GM12878 (cell line): ENCODE measurements at regions of chr17 and their contacts with region 1.

Region 1: GRCh38 chr17:28057731-28058279 is 15.3 kb downstream of the NLK start:
- DNase-seq: peak; percentile 84
- ATAC-seq: peak; percentile 89
- H3K4me3 ChIP-seq: peak overlapping the region; percentile 22; the same call in 1 of the 2 replicates
- H3K27ac ChIP-seq: peak overlapping the region; percentile 66
- H3K4me1 ChIP-seq: peaks cover 52% of the 10 kb centered on the region
- H3K27me3 ChIP-seq: no peaks in the 10 kb centered on the region
- CTCF ChIP-seq: no peak
- EP300 ChIP-seq: peak; percentile 98 to 99
- POLR2A ChIP-seq: no peak
- RAD21 ChIP-seq: no peak

Region 2: GRCh38 chr17:27293898-27294688 is 763.7 kb before region 1 on chr17 and contains the start of gene WSB1:
- CTCF ChIA-PET with region 1: no interaction called
- POLR2A ChIA-PET with region 1: no interaction called
- RAD21 ChIA-PET with region 1: no interaction called
- SMC1A ChIA-PET with region 1: no interaction called
- in situ Hi-C with region 1: loop called (anchors 25 kb)
- intact Hi-C with region 1: no loop called
- DNase-seq: peak; percentile 61
- ATAC-seq: peak; percentile 83
- H3K4me3 ChIP-seq: peak within 1 kb of the TSS; percentile 86
- H3K27ac ChIP-seq: peak within 1 kb of the TSS; percentile 97
- H3K4me1 ChIP-seq: peaks cover 11% of the 10 kb centered on the region
- H3K27me3 ChIP-seq: no peaks in the 10 kb centered on the region
- CTCF ChIP-seq: no peak
- EP300 ChIP-seq: peak; percentile 20 to 57; a peak in 2 of 4 replicates
- POLR2A ChIP-seq: peak; percentile 100
- RAD21 ChIP-seq: no peak
- polyA plus RNA-seq, gene WSB1: 26.6 to 49.8 TPM

Region 3: GRCh38 chr17:27892866-27893769 is 164.7 kb before region 1 on chr17 and contains the start of gene LYRM9:
- CTCF ChIA-PET with region 1: interaction called, 19 read pairs
- POLR2A ChIA-PET with region 1: no interaction called
- RAD21 ChIA-PET with region 1: interaction called, 4 read pairs
- SMC1A ChIA-PET with region 1: interaction called, 3 read pairs
- in situ Hi-C with region 1: no loop called
- intact Hi-C with region 1: no loop called
- DNase-seq: peak; percentile 48
- ATAC-seq: peak; percentile 99
- H3K4me3 ChIP-seq: peak within 1 kb of the TSS; percentile 65
- H3K27ac ChIP-seq: peak within 1 kb of the TSS; percentile 61
- H3K4me1 ChIP-seq: peaks cover 8% of the 10 kb centered on the region
- H3K27me3 ChIP-seq: no peaks in the 10 kb centered on the region
- CTCF ChIP-seq: peak; percentile 77 to 91 (median 79)
- EP300 ChIP-seq: no peak
- POLR2A ChIP-seq: peak; percentile 72
- RAD21 ChIP-seq: peak; percentile 40
- polyA plus RNA-seq, gene LYRM9: 1.8 to 2.7 TPM

Region 4: DNA sequence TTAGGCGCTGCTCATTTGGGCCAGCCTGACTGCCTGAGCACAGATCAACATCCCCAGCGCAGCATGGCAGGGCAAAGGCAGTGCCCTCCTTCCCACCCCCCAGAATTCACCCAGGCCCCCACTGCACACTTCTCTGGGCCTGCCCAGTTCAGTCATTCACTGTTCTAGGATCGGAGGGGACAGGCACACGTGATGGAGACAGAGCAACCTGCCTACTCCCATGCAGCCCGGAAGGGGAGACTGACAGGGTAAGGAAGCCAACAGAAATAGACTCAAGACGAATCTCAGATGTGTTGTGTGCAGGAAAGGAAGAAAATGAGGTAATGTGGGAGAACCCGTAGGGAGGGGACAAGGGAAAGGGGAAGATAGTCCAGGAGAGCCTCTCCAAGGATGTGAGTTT is 105.4 kb before region 1 on chr17:
- CTCF ChIA-PET with region 1: no interaction called
- POLR2A ChIA-PET with region 1: no interaction called
- RAD21 ChIA-PET with region 1: no interaction called
- SMC1A ChIA-PET with region 1: no interaction called
- in situ Hi-C with region 1: no loop called
- intact Hi-C with region 1: no loop called
- DNase-seq: no peak
- ATAC-seq: no peak
- H3K4me3 ChIP-seq: no peak overlapping the region
- H3K27ac ChIP-seq: no peak overlapping the region
- H3K4me1 ChIP-seq: no peaks in the 10 kb centered on the region
- H3K27me3 ChIP-seq: no peaks in the 10 kb centered on the region
- CTCF ChIP-seq: no peak
- EP300 ChIP-seq: no peak
- POLR2A ChIP-seq: no peak
- RAD21 ChIP-seq: no peak

Region 5: GRCh38 chr17:28041068-28041843 is 16.5 kb before region 1 on chr17:
- CTCF ChIA-PET with region 1: interaction called, 6 read pairs
- POLR2A ChIA-PET with region 1: interaction called, 10 read pairs
- RAD21 ChIA-PET with region 1: interaction called, 16 read pairs
- SMC1A ChIA-PET with region 1: interaction called, 72 read pairs
- in situ Hi-C with region 1: no loop called
- intact Hi-C with region 1: no loop called
- DNase-seq: peak; percentile 97
- ATAC-seq: peak; percentile 96
- H3K4me3 ChIP-seq: peak overlapping the region; percentile 53
- H3K27ac ChIP-seq: no peak overlapping the region; the same call in 1 of the 2 replicates
- H3K4me1 ChIP-seq: peaks cover 10% of the 10 kb centered on the region
- H3K27me3 ChIP-seq: no peaks in the 10 kb centered on the region
- CTCF ChIP-seq: no peak
- EP300 ChIP-seq: peak in 1 of 2 experiments; percentile 7; a peak in 1 of 4 replicates
- POLR2A ChIP-seq: peak; percentile 94
- RAD21 ChIP-seq: no peak

Region 6: GRCh38 chr17:28078341-28079229 is 20.8 kb after region 1 on chr17:
- CTCF ChIA-PET with region 1: interaction called, 5 read pairs
- POLR2A ChIA-PET with region 1: interaction called, 3 read pairs
- RAD21 ChIA-PET with region 1: interaction called, 3 read pairs
- SMC1A ChIA-PET with region 1: interaction called, 11 read pairs
- in situ Hi-C with region 1: no loop called
- intact Hi-C with region 1: no loop called
- DNase-seq: no peak
- ATAC-seq: no peak
- H3K4me3 ChIP-seq: no peak overlapping the region
- H3K27ac ChIP-seq: no peak overlapping the region
- H3K4me1 ChIP-seq: peaks cover 4% of the 10 kb centered on the region
- H3K27me3 ChIP-seq: no peaks in the 10 kb centered on the region
- CTCF ChIP-seq: no peak
- EP300 ChIP-seq: no peak
- POLR2A ChIP-seq: no peak
- RAD21 ChIP-seq: no peak

Region 7: DNA sequence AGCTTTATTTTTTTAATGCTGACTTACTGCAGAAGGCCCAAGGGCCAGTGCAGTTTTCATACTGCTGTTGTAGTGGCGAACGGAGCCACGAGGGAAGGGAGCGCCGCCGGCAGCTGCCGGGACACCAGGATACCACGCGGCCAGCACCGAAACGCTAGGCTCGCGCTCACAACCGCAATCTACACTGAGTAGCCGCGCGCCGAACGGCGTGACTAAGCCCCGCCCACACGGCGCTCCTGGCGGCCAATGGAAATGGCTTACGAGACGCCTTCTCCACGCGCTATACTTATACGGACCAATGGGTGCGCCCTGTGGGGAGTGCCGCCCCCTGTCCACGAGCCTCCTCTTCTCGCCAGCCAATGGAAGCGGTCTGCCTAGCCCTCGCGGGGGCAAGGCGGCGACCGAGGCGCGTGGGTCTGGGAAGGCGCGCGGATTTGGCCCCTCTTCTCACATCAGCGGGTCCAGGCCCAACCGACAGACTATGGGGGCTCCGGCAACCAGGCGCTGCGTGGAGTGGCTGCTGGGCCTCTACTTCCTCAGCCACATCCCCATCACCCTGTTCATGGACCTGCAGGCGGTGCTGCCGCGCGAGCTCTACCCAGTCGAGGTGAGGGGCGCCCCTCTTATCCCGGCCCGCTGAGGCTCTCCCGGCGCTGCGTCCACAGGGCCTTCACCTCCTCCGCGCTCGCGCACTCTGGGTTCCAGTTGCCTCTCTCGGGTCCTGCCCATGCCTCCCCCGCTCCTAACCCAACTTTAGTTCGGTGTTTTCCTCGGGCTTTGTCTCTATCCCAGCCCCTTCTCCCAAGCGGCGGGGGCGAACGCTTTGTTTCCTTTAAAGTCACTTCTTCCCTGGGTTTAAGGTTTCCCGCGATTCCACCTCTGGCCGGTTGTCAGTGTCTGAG is 261.2 kb after region 1 on chr17 and contains the start of gene TMEM97:
- CTCF ChIA-PET with region 1: no interaction called
- POLR2A ChIA-PET with region 1: no interaction called
- RAD21 ChIA-PET with region 1: no interaction called
- SMC1A ChIA-PET with region 1: no interaction called
- in situ Hi-C with region 1: no loop called
- intact Hi-C with region 1: loop called (anchors 10 kb)
- DNase-seq: peak; percentile 87
- ATAC-seq: peak; percentile 98
- H3K4me3 ChIP-seq: peak within 1 kb of the TSS; percentile 94
- H3K27ac ChIP-seq: peak within 1 kb of the TSS; percentile 73
- H3K4me1 ChIP-seq: no peaks in the 10 kb centered on the region; the same call in 1 of the 2 replicates
- H3K27me3 ChIP-seq: no peaks in the 10 kb centered on the region
- CTCF ChIP-seq: 0 out of 6 replicates have a peak, but pooled peaks of 2 of the 3 experiments have one; percentile 3 to 9
- EP300 ChIP-seq: no peak
- POLR2A ChIP-seq: peak; percentile 83
- RAD21 ChIP-seq: no peak
- polyA plus RNA-seq, gene TMEM97: 58.0 to 130 TPM